ENCODE measurements at regions of chr1 and their contacts with region 1.

Region 1: DNA sequence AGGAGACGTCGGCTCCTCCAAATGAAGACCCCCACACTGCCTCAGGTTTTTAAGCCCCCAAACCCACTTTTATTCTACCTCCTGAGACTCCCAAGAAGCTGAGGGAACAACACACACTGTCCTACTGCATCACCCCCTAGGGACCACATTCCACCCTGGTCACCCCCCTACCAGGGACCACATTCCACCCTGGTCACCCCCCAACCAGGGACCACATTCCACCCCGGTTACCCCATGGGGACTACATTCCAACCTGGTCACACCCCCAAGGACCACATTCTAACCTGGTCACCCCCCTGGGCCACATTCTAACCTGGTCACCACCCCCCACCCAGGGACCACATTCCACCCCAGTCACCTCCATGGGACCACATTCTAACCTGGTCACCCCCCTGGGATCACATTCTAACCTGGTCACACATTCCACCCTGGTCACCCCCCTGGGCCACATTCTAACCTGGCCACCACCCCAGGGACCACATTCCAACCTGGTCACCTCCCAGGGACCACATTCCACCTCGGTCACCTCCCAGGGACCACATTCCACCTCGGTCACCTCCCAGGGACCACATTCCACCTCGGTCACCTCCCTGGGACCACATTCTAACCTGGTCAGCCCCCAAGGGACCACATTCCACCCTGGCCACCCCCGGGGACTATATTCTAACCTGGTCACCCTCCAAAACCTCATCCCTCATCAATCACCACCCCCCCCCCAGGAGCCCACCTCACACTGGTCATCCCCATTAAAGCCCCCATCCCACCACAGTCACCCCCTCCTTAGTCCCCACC is 587.6 kb downstream of the NPHP4 start:
- DNase-seq: no peak
- ATAC-seq: no peak
- H3K4me3 ChIP-seq: no peak overlapping the region
- H3K27ac ChIP-seq: no peak overlapping the region
- H3K4me1 ChIP-seq: no peaks in the 10 kb centered on the region
- H3K27me3 ChIP-seq: peaks cover 0 to 15% (median 0%) of the 10 kb centered on the region in 9 donors
- CTCF ChIP-seq: no peak
- POLR2A ChIP-seq: no peak

Region 2: GRCh38 chr1:5688081-5689077 is 283.8 kb after region 1 on chr1:
- intact Hi-C with region 1: loop called in 1 of 10 experiments (anchors 5 kb)
- DNase-seq: no peak
- ATAC-seq: no peak
- H3K4me3 ChIP-seq: no peak overlapping the region
- H3K27ac ChIP-seq: no peak overlapping the region
- H3K4me1 ChIP-seq: no peaks in the 10 kb centered on the region
- H3K27me3 ChIP-seq: peaks cover 0 to 30% (median 0%) of the 10 kb centered on the region in 9 donors
- CTCF ChIP-seq: no peak
- POLR2A ChIP-seq: no peak

Measured in heart left ventricle (tissue), 16 donors.